Naive thymus-derived CD4-positive, alpha-beta T cell (primary cell): ENCODE measurements at regions of chr12 and their contacts with region 1.

Region 1: DNA sequence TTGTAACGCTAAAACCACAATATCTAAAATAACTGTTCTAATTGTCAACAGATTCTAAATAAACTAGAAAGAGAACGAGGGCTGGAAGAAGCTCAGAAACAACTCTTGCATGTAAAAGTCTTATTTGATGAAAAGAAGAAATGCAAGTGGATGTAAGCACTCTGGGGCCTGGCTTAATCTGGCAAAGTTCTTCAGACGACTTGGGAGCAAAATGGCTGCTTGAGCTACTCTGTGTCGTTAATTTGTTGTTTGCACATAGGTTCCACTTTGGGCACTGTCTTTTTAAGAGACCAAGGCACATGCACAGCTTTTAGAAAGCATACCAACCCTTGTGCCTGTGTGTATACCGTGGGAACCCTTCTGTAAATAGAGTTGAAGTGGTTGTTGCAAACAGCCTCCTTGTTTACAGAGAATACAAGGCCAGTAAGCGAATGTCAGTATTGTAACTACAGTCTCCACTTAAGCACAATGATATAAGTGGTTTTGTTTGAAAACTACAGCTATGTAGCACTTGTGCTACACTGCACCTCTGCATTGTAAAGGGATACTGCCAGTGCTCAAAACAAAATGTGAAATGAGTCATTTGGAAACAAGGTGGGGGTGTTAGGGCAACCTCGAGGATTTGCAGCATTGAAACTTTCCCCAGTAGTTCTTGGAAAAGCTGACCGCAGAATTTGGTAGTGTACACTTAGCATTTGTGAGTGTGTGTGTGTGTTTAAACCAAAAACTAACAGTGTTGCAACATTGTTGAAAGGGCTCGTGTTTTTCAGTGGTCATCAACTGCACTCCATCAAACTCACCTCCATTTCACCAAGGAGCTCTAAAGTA is 154.3 kb downstream of the CEP83 start:
- DNase-seq: peak in 1 of 9 donors; percentile 69
- ATAC-seq: no peak
- H3K4me3 ChIP-seq: no peak overlapping the region
- H3K4me3 Mint-ChIP-seq: peak overlapping the region in 1 of 10 donors; percentile 70
- H3K27ac ChIP-seq: no peak overlapping the region
- H3K27ac Mint-ChIP-seq: peak overlapping the region in 1 of 9 donors; percentile 87
- H3K4me1 ChIP-seq: no peaks in the 10 kb centered on the region
- H3K4me1 Mint-ChIP-seq: peaks cover 0 to 57% (median 0%) of the 10 kb centered on the region in 7 donors
- H3K27me3 ChIP-seq: no peaks in the 10 kb centered on the region
- H3K27me3 Mint-ChIP-seq: no peaks in the 10 kb centered on the region

Region 2: DNA sequence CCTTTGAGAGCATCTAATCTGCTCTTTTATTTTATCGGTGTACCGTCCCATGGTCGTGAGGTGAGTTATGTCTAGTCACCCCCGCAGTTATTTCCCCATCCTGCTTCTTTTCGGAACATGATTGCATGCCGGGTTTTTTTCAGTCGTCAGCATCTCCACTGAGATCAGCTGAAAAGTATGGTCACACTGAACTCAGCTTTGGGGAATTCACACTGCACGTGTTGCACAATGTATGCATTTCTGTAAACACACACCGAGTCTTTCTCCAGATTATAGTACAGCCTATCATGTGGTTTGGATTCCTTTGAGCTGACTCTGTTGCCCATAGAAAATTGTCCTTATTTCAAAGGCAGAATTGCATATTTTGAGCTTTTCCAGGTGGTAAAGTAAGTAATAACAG is 132.4 kb before region 1 on chr12:
- CTCF ChIA-PET with region 1: no interaction called
- POLR2A ChIA-PET with region 1: no interaction called
- intact Hi-C with region 1: loop called in 1 of 2 experiments (anchors 1 kb)
- DNase-seq: no peak
- ATAC-seq: peak; percentile 58
- H3K4me3 ChIP-seq: no peak overlapping the region
- H3K4me3 Mint-ChIP-seq: no peak overlapping the region
- H3K27ac ChIP-seq: no peak overlapping the region
- H3K27ac Mint-ChIP-seq: peak overlapping the region in 1 of 9 donors; percentile 36
- H3K4me1 ChIP-seq: peaks cover 14 to 27% of the 10 kb centered on the region in 2 donors
- H3K4me1 Mint-ChIP-seq: peaks cover 39 to 67% (median 59%) of the 10 kb centered on the region in 7 donors
- H3K27me3 ChIP-seq: no peaks in the 10 kb centered on the region
- H3K27me3 Mint-ChIP-seq: peaks cover 0 to 3% (median 0%) of the 10 kb centered on the region in 5 donors

Region 3: DNA sequence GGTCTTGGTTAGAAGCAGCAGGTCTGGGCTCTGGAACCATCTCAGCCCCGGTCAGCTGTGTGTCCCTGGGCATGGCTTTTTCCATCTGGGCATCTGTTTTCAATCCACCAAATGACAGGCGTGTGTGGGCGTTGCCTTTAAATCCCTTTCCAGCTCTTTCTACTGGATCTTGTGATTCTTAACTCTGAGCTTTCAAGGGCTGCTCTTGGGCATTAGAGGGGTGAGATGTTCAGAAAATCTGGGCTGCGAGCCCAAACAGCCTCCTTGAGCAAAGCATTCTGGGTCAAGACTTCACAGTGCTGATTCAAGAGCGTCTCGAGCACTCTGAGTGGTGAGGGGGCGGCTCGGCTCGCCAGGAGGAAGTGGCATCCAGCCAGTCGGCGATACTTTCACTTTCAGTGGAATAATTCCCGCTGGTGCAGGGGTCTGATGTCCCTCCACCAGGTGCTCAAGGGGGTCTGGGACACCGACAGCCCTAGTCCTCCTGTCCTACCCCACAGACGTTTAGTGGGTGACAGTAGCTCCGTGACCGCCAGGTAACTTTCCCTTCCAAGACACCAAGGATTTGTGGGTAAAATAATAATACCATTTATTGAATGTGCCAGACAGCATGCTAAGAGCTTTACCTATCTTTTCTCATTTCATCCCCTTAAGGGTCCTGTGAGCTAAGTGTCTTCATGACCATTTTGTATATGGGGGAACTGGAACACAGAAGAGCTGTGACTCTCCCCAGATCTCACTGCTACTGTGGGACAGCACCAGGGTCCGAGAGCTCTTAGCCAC is 42.9 kb before region 1 on chr12:
- CTCF ChIA-PET with region 1: no interaction called
- POLR2A ChIA-PET with region 1: no interaction called
- intact Hi-C with region 1: loop called in 1 of 2 experiments (anchors 1 kb)
- DNase-seq: peak; percentile 50 to 81 (median 72)
- ATAC-seq: peak; percentile 89
- H3K4me3 ChIP-seq: peak overlapping the region; percentile 94
- H3K4me3 Mint-ChIP-seq: peak overlapping the region; percentile 80 to 99 (median 97)
- H3K27ac ChIP-seq: peak overlapping the region; percentile 91
- H3K27ac Mint-ChIP-seq: peak overlapping the region; percentile 91 to 100 (median 99)
- H3K4me1 ChIP-seq: peaks cover 15 to 18% of the 10 kb centered on the region in 2 donors
- H3K4me1 Mint-ChIP-seq: peaks cover 23 to 52% (median 46%) of the 10 kb centered on the region in 7 donors
- H3K27me3 ChIP-seq: no peaks in the 10 kb centered on the region
- H3K27me3 Mint-ChIP-seq: no peaks in the 10 kb centered on the region

Region 4: DNA sequence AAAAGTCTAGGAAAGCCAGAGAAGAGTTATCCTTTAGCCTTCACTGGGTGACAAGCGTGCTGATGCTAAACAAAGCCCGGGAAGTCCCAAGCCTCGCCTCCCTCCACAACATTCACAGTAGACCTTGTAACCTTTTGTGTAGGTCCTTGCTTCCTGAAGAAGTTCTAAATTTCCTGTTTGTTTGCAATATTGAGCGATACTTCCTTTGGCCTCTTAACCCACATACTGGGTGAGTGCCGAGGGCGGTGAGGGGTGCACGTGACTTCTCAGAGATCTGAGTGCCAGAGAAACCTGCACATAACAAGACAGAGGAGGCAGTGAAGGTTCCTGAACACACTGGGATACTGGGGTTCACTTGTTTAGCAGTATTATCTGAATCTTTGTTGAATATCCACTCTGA is 22.7 kb before region 1 on chr12:
- CTCF ChIA-PET with region 1: no interaction called
- POLR2A ChIA-PET with region 1: no interaction called
- intact Hi-C with region 1: loop called in 1 of 2 experiments (anchors 2 kb)
- DNase-seq: peak in 7 of 9 donors; percentile 29 to 59 (median 39)
- ATAC-seq: peak; percentile 83
- H3K4me3 ChIP-seq: peak overlapping the region; percentile 31
- H3K4me3 Mint-ChIP-seq: peak overlapping the region; percentile 50 to 74 (median 68)
- H3K27ac ChIP-seq: peak overlapping the region; percentile 9
- H3K27ac Mint-ChIP-seq: peak overlapping the region; percentile 77 to 98 (median 88)
- H3K4me1 ChIP-seq: peaks cover 14 to 25% of the 10 kb centered on the region in 2 donors
- H3K4me1 Mint-ChIP-seq: peaks cover 21 to 33% (median 26%) of the 10 kb centered on the region in 7 donors
- H3K27me3 ChIP-seq: no peaks in the 10 kb centered on the region
- H3K27me3 Mint-ChIP-seq: no peaks in the 10 kb centered on the region

Region 5: GRCh38 chr12:94372461-94372860 is 67.1 kb after region 1 on chr12:
- CTCF ChIA-PET with region 1: no interaction called
- POLR2A ChIA-PET with region 1: no interaction called
- intact Hi-C with region 1: loop called in 1 of 2 experiments (anchors 1 kb)
- DNase-seq: no peak
- ATAC-seq: no peak
- H3K4me3 ChIP-seq: no peak overlapping the region
- H3K4me3 Mint-ChIP-seq: peak overlapping the region in 1 of 10 donors; percentile 20
- H3K27ac ChIP-seq: no peak overlapping the region
- H3K27ac Mint-ChIP-seq: peak overlapping the region in 1 of 9 donors; percentile 79
- H3K4me1 ChIP-seq: no peaks in the 10 kb centered on the region
- H3K4me1 Mint-ChIP-seq: peaks cover 0 to 17% (median 0%) of the 10 kb centered on the region in 7 donors
- H3K27me3 ChIP-seq: no peaks in the 10 kb centered on the region
- H3K27me3 Mint-ChIP-seq: no peaks in the 10 kb centered on the region